Activated CD4-positive, alpha-beta memory T cell treated with anti-CD3 and anti-CD28 coated beads for 36 hours (primary cell): ENCODE measurements at regions of chr2 and their contacts with region 1.

Region 1: DNA sequence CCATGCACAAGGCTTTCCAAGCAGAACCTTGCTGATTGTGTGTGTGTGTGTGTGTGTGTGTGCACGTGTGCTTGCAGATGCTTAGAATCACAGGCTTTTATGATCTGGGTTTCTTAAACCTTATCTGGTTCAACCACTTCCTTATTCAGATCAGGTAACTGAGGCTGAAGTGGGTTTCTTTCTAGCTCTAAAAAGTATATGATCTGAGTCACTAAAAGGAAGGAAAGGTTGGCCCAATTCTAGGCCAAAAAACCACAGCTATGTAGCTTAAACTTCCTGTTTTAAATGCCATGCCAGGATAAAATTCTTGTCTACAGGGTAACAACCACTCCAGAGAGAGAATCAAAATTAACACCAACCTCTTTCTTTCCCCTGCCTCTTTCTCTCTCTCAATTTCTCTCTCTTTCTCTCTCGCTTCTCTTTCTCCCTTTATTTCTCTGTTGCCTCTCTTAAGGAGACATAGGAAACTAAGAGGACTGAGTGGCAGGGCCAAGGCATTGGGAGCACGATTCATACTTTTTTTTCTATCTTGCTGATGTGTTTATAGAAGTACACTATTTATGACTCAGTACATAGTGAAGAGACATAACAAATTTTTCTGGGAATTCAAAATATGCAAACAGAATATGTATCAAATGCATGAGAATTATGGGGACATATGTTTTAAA is 140.3 kb downstream of the TRIB2 start:
- DNase-seq: peak; percentile 36
- H3K4me3 Mint-ChIP-seq: no peak overlapping the region
- H3K27ac Mint-ChIP-seq: no peak overlapping the region
- H3K4me1 Mint-ChIP-seq: peaks cover 19% of the 10 kb centered on the region
- H3K27me3 Mint-ChIP-seq: no peaks in the 10 kb centered on the region

Region 2: DNA sequence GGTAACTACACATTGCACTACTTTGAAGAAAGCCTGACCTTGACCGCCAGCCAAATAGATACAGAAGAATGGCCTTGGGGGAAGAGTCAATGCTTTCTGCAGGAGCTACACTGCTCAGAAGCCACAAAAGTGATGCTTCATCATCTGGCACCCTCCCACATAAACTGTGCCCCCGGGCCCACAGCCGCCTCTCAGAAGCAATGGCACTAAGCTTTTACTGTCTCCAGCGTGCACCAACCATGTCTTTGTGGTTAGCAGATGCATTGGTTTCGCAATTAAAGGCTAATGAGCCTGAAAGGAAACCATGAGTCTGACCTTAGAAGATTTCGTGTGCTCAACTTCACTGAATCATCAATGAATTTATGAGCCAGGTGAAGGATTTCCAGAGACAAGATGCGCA is 349.8 kb before region 1 on chr2:
- CTCF ChIA-PET with region 1: no interaction called
- POLR2A ChIA-PET with region 1: no interaction called
- intact Hi-C with region 1: loop called (anchors 5 kb)
- DNase-seq: peak; percentile 88
- H3K4me3 Mint-ChIP-seq: peak overlapping the region; percentile 27
- H3K27ac Mint-ChIP-seq: peak overlapping the region; percentile 33
- H3K4me1 Mint-ChIP-seq: peaks cover 77% of the 10 kb centered on the region
- H3K27me3 Mint-ChIP-seq: no peaks in the 10 kb centered on the region

Region 3: GRCh38 chr2:12728221-12728777 is 128.8 kb before region 1 on chr2:
- CTCF ChIA-PET with region 1: no interaction called
- POLR2A ChIA-PET with region 1: no interaction called
- intact Hi-C with region 1: loop called (anchors 1 kb)
- DNase-seq: peak; percentile 78
- H3K4me3 Mint-ChIP-seq: peak overlapping the region; percentile 46
- H3K27ac Mint-ChIP-seq: peak overlapping the region; percentile 70
- H3K4me1 Mint-ChIP-seq: peaks cover 83% of the 10 kb centered on the region
- H3K27me3 Mint-ChIP-seq: no peaks in the 10 kb centered on the region

Region 4: GRCh38 chr2:12819103-12819475 is 38.0 kb before region 1 on chr2:
- CTCF ChIA-PET with region 1: no interaction called
- POLR2A ChIA-PET with region 1: no interaction called
- intact Hi-C with region 1: loop called (anchors 2 kb)
- DNase-seq: no peak
- H3K4me3 Mint-ChIP-seq: no peak overlapping the region
- H3K27ac Mint-ChIP-seq: no peak overlapping the region
- H3K4me1 Mint-ChIP-seq: peaks cover 54% of the 10 kb centered on the region
- H3K27me3 Mint-ChIP-seq: no peaks in the 10 kb centered on the region

Region 5: GRCh38 chr2:12948961-12949353 is 91.9 kb after region 1 on chr2:
- CTCF ChIA-PET with region 1: no interaction called
- POLR2A ChIA-PET with region 1: no interaction called
- intact Hi-C with region 1: no loop called
- DNase-seq: peak; percentile 46
- H3K4me3 Mint-ChIP-seq: no peak overlapping the region
- H3K27ac Mint-ChIP-seq: no peak overlapping the region
- H3K4me1 Mint-ChIP-seq: peaks cover 9% of the 10 kb centered on the region
- H3K27me3 Mint-ChIP-seq: peaks cover 4% of the 10 kb centered on the region